Dendritic cell treated with granulocyte-macrophage colony-stimulating factor and Interleukin-4, amounts not matched to agents 40 ng/mL and 50 ng/mL, for 4 days (primary cell): ENCODE measurements at regions of chr2 and their contacts with region 1.

Region 1: DNA sequence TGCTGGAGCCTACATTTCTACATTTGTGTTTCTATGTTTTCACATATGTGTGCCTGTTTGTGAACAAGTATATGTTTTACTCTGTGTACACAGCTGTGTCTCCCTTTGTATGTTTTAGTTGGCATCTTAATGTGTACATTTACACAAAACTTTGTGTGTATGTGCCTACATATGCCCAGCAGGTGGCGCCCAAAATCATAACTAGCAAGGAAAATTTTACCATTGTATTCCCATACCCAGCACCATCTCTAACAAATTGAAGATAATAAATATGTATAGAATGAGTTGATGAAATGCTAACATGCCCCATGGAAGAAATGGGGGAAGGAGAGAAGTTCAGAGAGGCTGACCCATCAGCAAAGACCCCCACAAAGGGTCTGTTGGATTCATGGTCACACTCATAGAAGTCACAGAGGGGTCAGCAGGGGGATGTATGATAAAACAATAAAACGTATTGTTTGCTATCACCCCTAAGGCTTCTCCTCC is 48.1 kb downstream of the PKDCC start:
- H3K4me3 Mint-ChIP-seq: no peak overlapping the region
- H3K27ac Mint-ChIP-seq: no peak overlapping the region
- H3K4me1 Mint-ChIP-seq: peaks cover 64% of the 10 kb centered on the region
- H3K27me3 Mint-ChIP-seq: peaks cover 6% of the 10 kb centered on the region

Region 2: DNA sequence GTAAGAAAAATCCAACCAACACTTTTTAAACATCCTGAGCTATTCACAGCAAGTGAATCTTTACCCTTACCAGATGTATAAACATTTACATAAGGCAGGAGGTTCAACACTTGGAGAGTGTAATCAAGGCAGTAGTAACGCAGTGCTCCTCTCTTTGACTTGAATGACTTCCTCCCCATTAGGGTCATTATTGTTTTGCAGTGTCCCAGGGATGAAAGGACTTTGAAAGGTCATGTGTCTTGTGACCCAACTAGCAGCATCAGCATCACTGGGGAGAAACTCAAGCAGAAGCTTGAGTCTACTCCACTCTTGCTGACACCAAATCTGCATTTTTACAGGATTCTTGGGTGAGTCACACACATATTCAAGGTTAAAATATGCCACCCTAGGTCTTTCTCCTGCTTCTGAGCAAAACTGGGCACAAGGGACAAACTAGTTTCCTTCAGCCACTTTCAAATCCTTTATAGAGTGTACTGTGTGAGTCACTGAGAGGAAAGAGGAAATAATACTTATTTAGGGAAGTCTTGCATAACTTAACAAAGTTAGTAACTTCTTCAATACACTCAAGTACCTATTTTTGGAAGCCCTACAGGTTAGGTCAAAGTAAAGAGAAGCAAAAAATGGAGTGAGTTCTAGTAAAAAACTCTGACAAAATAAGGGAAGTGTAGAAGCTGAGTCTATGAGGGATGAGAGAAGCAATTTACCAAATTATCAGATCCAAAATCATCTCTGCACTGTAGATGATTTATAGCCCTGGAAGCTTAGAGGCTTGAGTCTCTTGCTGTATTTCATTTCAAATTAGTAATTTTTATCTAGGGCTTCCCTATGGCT is 22.2 kb after region 1 on chr2:
- intact Hi-C with region 1: loop called (anchors 1 kb)
- H3K4me3 Mint-ChIP-seq: no peak overlapping the region
- H3K27ac Mint-ChIP-seq: peak overlapping the region; percentile 72
- H3K4me1 Mint-ChIP-seq: peaks cover 58% of the 10 kb centered on the region
- H3K27me3 Mint-ChIP-seq: peaks cover 3% of the 10 kb centered on the region

Region 3: GRCh38 chr2:42169100-42169873 is 73.3 kb after region 1 on chr2 and contains the start of gene EML4:
- intact Hi-C with region 1: loop called (anchors 2 kb)
- H3K4me3 Mint-ChIP-seq: no peak within 1 kb of the TSS
- H3K27ac Mint-ChIP-seq: no peak within 1 kb of the TSS
- H3K4me1 Mint-ChIP-seq: peaks cover 10% of the 10 kb centered on the region
- H3K27me3 Mint-ChIP-seq: peaks cover 9% of the 10 kb centered on the region

Region 4: DNA sequence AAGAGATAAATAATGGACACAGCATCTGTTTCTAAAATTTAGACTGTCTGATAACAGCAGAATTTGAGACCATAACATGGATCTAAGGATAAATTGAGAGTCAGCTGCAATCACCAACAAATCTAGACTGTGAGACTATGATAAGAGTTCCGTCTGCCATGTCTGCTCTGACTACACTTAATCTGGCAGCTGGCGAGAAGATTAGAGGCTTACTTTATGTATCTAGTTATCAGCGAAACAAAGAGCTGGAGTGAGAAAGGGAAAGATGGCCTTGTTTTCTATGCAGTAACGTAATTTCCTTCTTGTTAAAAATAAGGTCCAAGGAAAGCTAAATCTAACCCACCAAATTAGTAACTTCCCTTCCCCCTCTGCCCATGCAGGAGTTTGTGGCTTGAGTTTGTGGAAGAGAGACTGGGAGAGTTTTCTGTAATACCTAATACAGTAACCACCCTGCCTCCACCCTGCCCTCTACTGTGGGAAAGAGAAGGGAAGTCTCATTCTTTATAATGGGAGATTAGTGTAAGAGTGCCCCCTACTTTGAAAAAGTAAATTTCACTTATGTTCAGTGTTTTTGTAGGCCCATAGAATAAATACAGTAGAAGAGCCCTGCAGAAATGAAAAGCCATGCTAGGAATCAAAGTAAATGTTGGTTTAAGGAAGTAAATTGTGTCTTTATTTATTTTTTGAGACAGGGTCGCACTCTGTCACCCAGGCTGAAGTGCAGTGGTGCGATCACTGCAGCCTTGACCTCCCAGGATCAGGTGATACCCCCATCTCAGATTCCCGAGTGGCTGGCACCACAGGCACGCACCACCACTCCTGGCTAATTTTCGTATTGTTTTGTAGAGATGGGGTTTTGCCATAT is 100.7 kb after region 1 on chr2:
- intact Hi-C with region 1: loop called (anchors 1 kb)
- H3K4me3 Mint-ChIP-seq: no peak overlapping the region
- H3K27ac Mint-ChIP-seq: no peak overlapping the region
- H3K4me1 Mint-ChIP-seq: peaks cover 57% of the 10 kb centered on the region
- H3K27me3 Mint-ChIP-seq: peaks cover 12% of the 10 kb centered on the region

Region 5: DNA sequence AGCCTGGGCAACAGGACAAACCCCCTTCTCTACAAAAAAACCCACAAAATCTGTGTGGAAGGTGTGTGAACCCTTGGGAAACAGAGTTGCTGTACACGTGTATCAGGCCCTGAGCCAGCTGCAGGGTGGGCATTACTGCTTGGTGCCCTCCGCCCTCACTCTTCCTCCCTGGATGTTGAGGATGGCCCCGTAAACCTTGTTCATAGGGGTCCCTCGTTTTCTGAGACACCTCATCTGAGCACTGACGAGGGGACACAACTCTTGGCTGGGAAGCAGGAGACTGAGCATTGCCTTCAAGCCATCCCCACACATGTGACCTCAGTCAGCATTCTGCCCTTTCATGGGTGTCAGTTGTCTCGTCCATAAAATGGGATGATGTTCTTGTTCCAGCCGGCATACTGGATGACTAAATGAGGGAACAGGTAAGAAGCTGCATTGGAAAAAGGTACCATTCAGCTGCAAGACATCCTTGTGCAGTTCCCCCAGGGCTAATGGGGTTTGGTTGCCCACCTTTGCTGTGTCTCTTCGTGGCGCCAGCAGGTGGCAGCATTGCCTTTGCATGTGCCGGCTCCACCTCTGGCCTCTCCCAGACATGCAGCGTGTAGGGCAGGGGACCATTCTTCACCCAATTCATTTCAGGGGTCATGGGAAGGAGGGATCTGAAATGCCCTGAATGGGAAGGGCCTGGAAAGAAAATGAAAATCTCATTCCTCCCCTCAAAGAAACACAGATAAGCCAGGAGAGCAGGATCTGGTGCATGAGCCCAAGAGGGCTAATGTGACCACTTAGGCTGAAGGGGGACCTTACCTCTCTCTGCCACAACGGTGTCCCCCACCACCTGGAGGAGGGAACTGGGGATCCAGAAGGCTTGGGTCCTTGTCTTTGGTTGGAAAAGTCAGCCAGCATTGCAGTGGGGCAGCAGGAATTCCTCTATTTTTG is 732.8 kb after region 1 on chr2:
- intact Hi-C with region 1: no loop called
- H3K4me3 Mint-ChIP-seq: no peak overlapping the region
- H3K27ac Mint-ChIP-seq: no peak overlapping the region
- H3K4me1 Mint-ChIP-seq: peaks cover 22% of the 10 kb centered on the region
- H3K27me3 Mint-ChIP-seq: peaks cover 16% of the 10 kb centered on the region